ENCODE measurements at regions of chrX and their contacts with region 1.

Region 1: DNA sequence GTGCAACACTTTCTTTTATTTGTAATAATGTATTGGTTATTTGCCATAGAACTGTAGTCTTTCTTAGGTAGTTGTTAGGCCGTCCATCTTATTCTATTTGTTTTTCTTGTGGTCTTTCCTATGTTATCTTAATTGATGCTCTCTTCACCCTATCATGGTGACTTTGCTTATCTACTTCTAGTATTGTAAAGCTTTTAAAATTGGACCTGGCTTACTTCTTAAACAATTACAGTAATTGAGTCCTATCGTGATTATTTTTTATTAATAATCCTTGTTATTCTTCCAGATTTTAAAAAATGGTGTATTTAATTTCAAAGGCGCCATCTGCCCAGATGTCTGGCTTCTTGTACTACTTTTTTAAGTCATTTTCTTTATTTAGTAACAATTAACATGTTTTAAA is 63.7 kb downstream of the CLCN5 start:
- DNase-seq: no peak
- H3K4me3 ChIP-seq: no peak overlapping the region
- H3K27ac ChIP-seq: no peak overlapping the region
- H3K4me1 ChIP-seq: no peaks in the 10 kb centered on the region
- H3K27me3 ChIP-seq: no peaks in the 10 kb centered on the region
- CTCF ChIP-seq: no peak
- EP300 ChIP-seq: no peak
- POLR2A ChIP-seq: no peak

Region 2: DNA sequence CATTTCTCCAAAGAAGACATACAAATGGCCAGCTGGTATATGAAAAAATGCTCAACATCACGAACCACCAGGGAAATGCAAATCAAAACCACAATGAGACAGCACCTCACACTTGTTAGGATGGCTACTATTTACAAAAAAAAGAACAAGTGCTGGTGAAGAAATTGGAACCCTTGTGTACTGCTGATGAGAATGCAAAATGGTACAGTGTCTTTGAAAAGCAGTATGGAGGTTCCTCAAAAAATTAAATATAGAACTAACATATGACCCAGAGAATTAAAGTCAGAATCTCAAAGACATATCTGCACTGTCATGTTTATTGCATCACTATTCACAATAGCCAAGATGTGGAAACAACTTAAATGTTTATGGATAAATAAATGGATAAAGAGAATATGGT is 136.0 kb before region 1 on chrX:
- intact Hi-C with region 1: no loop called
- DNase-seq: no peak
- H3K4me3 ChIP-seq: no peak overlapping the region
- H3K27ac ChIP-seq: no peak overlapping the region
- H3K4me1 ChIP-seq: no peaks in the 10 kb centered on the region
- H3K27me3 ChIP-seq: no peaks in the 10 kb centered on the region
- CTCF ChIP-seq: no peak
- EP300 ChIP-seq: no peak
- POLR2A ChIP-seq: no peak

Region 3: DNA sequence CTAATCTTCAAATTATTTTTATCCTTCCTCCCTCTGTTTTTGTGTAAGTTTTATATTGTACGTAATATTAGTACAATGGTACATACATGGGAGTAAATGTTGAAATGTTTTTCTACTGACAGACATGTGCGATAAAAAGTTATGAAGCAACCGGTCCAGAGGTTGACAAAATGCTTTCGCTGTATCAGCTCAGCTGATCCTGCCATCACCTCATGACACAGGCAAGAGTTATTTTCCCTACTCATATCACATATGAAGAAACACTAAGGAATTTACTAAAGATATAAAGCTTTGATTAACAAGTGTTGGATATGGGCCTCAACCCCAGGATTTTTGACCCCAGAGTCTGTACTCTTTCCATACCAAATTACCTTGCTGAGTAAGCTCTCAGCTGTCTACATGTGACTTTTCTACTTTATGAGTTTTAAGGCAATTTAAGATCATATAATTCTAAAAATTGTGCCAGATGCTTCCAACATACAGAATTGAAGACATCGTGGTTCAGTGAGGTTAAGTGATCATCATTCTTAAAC is 13.7 kb before region 1 on chrX:
- intact Hi-C with region 1: loop called (anchors 1 kb)
- DNase-seq: no peak
- H3K4me3 ChIP-seq: no peak overlapping the region
- H3K27ac ChIP-seq: no peak overlapping the region
- H3K4me1 ChIP-seq: no peaks in the 10 kb centered on the region
- H3K27me3 ChIP-seq: no peaks in the 10 kb centered on the region
- CTCF ChIP-seq: no peak
- EP300 ChIP-seq: no peak
- POLR2A ChIP-seq: no peak

Region 4: GRCh38 chrX:50343917-50344316 is 357.9 kb after region 1 on chrX:
- intact Hi-C with region 1: no loop called
- DNase-seq: no peak
- H3K4me3 ChIP-seq: no peak overlapping the region
- H3K27ac ChIP-seq: no peak overlapping the region
- H3K4me1 ChIP-seq: no peaks in the 10 kb centered on the region
- H3K27me3 ChIP-seq: no peaks in the 10 kb centered on the region
- CTCF ChIP-seq: no peak
- EP300 ChIP-seq: no peak
- POLR2A ChIP-seq: no peak